Right cardiac atrium (tissue), 5 donors: ENCODE measurements at regions of chr18 and their contacts with region 1.

Region 1: GRCh38 chr18:58128381-58129374 is 84.7 kb downstream of the NEDD4L start:
- DNase-seq: no peak
- ATAC-seq: peak in 1 of 2 donors; percentile 24
- H3K4me3 ChIP-seq: no peak overlapping the region
- H3K27ac ChIP-seq: no peak overlapping the region
- H3K4me1 ChIP-seq: no peaks in the 10 kb centered on the region
- H3K27me3 ChIP-seq: no peaks in the 10 kb centered on the region

Region 2: GRCh38 chr18:57881818-57882413 is 246.8 kb before region 1 on chr18:
- intact Hi-C with region 1: loop called (anchors 5 to 10 kb)
- DNase-seq: peak; percentile 42 to 71 (median 65)
- ATAC-seq: peak; percentile 88 to 94
- H3K4me3 ChIP-seq: no peak overlapping the region
- H3K27ac ChIP-seq: no peak overlapping the region
- H3K4me1 ChIP-seq: no peaks in the 10 kb centered on the region
- H3K27me3 ChIP-seq: no peaks in the 10 kb centered on the region

Region 3: DNA sequence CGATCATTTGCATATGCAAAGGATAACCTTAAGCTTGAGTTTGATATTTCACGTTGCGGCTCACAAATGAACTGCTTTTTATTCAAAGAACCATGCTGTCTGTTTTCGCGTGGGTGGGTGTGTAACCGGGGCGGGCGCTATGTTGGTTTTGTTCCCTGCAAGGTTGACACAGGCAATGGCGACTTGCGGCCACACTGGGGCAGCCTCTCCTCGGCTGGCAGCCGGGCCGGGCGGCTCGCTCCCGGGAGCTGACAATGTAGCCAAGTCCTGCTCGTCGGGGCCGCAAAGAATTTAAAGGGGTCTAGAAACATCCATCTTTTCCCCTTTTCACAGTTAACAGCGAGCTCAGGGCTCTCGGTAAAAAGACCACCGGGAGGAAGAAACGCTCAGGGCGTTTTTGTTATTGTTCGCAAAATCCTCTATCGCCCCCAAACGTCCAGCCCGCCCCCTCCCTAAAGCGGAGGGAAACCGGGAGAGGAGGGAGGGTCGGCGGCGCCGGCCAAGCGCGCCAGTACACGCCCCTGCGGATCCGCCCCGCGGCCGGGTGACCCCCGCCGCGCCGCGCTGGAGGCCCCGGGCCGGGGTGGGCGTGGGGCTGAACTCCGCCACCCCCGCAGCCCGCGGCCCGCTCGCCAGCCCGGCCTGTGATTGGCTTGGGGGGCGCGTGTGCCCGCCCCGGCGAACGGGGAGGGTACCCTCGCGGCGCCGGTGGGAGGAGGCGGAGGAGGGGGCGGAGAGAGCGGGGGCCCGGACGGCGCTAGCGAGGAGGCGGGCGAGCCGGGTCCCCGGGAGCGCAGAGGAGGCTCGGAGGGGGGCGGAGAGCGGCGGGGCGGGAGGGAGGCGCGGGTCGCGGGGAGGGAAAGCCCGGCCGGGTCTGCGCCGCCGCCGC is 84.9 kb before region 1 on chr18 and contains the start of gene NEDD4L:
- intact Hi-C with region 1: loop called (anchors 2 to 5 kb)
- DNase-seq: peak; percentile 85 to 93 (median 93)
- ATAC-seq: peak; percentile 92 to 94
- H3K4me3 ChIP-seq: peak within 1 kb of the TSS; percentile 92
- H3K27ac ChIP-seq: peak within 1 kb of the TSS; percentile 70
- H3K4me1 ChIP-seq: no peaks in the 10 kb centered on the region
- H3K27me3 ChIP-seq: no peaks in the 10 kb centered on the region
- total RNA-seq, gene NEDD4L: 72.6 to 87.5 (median 76.0) TPM